PC-9 (cell line): ENCODE measurements at regions of chr5 and their contacts with region 1.

Region 1: GRCh38 chr5:176415952-176416924 is at the start of gene CLTB:
- DNase-seq: peak; percentile 85 to 87
- H3K4me3 ChIP-seq: peak within 1 kb of the TSS; percentile 98
- H3K27ac ChIP-seq: peak within 1 kb of the TSS; percentile 94
- H3K4me1 ChIP-seq: peaks cover 81% of the 10 kb centered on the region
- H3K27me3 ChIP-seq: no peaks in the 10 kb centered on the region
- CTCF ChIP-seq: peak; percentile 29; the same call in 1 of the 2 replicates
- total RNA-seq, gene CLTB: 123 and 126 TPM in 2 replicates

Region 2: GRCh38 chr5:176447982-176448608 is 31.9 kb after region 1 on chr5 and contains the start of gene FAF2:
- CTCF ChIA-PET with region 1: interaction called, 8 read pairs
- POLR2A ChIA-PET with region 1: interaction called, 13 read pairs
- intact Hi-C with region 1: loop called (anchors 1 kb)
- DNase-seq: peak; percentile 97 to 100
- H3K4me3 ChIP-seq: peak within 1 kb of the TSS; percentile 89
- H3K27ac ChIP-seq: peak within 1 kb of the TSS; percentile 89
- H3K4me1 ChIP-seq: peaks cover 34% of the 10 kb centered on the region
- H3K27me3 ChIP-seq: no peaks in the 10 kb centered on the region
- CTCF ChIP-seq: peak; percentile 97
- total RNA-seq, gene FAF2: 41.2 and 59.7 TPM in 2 replicates

Region 3: GRCh38 chr5:176458904-176459561 is 42.8 kb after region 1 on chr5:
- CTCF ChIA-PET with region 1: no interaction called
- POLR2A ChIA-PET with region 1: no interaction called
- intact Hi-C with region 1: no loop called
- DNase-seq: no peak
- H3K4me3 ChIP-seq: no peak overlapping the region
- H3K27ac ChIP-seq: no peak overlapping the region
- H3K4me1 ChIP-seq: 0 out of 2 replicates have a peak, but pooled peaks cover 4% of the 10 kb centered on the region
- H3K27me3 ChIP-seq: no peaks in the 10 kb centered on the region
- CTCF ChIP-seq: no peak

Region 4: DNA sequence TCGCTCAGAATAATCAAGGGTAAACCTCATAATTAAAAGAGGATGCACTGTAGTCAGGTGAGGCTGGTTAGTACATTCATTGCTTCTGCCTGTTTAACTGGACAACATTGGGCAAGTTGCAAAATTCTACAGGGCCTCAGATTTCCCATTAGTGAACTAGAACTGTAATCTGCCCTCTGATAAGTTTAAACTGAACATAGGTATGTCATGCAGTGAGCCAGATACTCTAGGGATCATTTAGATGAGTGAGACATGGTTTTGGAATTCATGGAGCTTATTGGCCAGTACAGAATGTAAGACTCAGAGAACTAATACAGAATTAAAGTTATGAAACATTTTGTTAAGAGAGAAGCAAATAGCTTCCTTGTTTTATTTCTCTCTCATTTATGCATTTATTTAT is 85.1 kb after region 1 on chr5:
- CTCF ChIA-PET with region 1: no interaction called
- POLR2A ChIA-PET with region 1: interaction called, 4 read pairs
- intact Hi-C with region 1: loop called (anchors 5 kb)
- DNase-seq: peak in 1 of 2 experiments; percentile 70
- H3K4me3 ChIP-seq: no peak overlapping the region
- H3K27ac ChIP-seq: no peak overlapping the region
- H3K4me1 ChIP-seq: peaks cover 19% of the 10 kb centered on the region
- H3K27me3 ChIP-seq: no peaks in the 10 kb centered on the region
- CTCF ChIP-seq: no peak

Region 5: DNA sequence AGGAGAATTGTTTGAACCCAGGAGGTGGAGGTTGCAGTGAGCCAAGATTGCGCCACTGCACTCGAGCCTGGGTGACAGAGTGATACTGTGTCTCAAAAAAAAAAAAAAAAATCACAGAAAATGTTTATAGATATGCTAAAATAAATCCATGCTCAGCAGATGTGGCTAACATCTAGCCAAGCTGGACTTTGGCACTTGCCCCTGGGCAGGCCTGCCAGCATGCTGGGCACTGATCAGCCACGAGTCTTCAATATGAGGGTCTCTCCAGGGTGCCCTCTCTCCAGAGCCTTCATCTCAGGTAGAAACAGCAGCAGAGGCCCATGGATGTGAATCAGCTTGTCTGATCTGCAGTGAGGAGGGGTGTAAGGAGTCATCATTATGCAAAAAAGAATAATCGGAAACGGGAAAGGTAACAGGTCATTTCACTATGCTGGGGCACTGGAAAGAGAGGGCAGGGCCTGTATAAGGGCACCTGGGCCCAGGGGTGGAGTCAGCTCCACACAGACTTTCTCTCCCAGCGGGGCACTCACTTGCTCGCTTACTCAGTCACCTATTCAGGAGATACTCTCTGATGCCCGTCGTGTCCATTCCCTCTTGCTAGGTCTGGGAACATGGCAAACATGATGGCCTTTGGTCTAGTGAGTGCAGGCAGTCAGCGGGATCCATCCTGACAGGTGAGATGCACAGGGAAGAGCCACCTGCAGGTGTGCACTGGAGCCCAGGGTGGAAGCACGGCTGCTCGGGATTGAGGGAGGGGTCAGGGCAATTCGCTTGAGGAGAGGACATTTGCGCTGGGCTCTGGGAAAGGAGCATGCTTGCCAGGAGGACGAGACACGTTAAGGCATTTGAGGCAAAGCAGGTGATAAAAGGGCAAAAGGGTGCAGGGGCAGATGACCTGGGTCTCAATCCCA is 103.8 kb after region 1 on chr5:
- CTCF ChIA-PET with region 1: interaction called, 4 read pairs
- POLR2A ChIA-PET with region 1: interaction called, 16 read pairs
- intact Hi-C with region 1: no loop called
- DNase-seq: no peak
- H3K4me3 ChIP-seq: no peak overlapping the region
- H3K27ac ChIP-seq: no peak overlapping the region
- H3K4me1 ChIP-seq: peaks cover 8% of the 10 kb centered on the region
- H3K27me3 ChIP-seq: no peaks in the 10 kb centered on the region
- CTCF ChIP-seq: no peak

Region 6: DNA sequence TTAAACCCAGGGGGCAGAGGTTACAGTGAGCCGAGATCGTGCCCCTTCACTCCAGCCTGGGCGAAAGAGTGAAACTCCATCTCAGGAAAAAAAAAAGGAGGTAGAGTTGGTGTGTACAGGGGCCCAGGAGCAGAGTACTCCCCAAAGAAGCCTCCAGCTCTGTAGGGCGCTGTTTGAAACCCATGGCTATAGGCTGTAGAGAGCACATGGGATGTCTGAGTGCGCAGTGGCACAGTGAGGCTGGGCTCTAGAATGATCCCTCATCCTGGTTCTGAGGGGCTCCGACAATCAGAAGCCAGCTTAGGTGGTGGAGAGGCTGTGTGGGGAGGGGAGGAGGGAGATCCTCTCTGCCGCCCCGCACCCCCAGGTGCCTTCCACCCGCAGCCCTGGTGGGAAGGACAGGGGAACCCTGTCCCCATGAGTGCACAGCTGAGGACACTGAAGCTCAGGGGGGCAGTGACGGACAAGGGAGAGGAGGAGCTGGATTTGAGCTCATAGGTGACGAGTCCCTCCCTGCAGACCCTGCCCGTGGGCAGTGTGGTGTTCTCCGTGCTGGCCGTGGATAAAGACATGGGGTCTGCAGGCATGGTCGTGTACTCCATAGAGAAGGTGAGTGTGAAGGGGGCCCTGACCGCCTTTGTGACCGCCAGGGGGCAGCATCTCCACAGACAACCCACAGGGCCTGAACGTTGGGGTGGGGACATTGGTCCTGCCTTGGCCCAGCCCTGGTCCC is 157.5 kb after region 1 on chr5:
- CTCF ChIA-PET with region 1: interaction called, 3 read pairs
- POLR2A ChIA-PET with region 1: no interaction called
- intact Hi-C with region 1: loop called (anchors 1 kb)
- DNase-seq: peak in 1 of 2 experiments; percentile 62
- H3K4me3 ChIP-seq: no peak overlapping the region
- H3K27ac ChIP-seq: no peak overlapping the region
- H3K4me1 ChIP-seq: 0 out of 2 replicates have a peak, but pooled peaks cover 4% of the 10 kb centered on the region
- H3K27me3 ChIP-seq: no peaks in the 10 kb centered on the region
- CTCF ChIP-seq: peak; percentile 90